Naive thymus-derived CD4-positive, alpha-beta T cell (primary cell): ENCODE measurements at regions of chr15 and their contacts with region 1.

Region 1: GRCh38 chr15:91444656-91445055 is 344.6 kb downstream of the SV2B start:
- DNase-seq: no peak
- ATAC-seq: no peak
- H3K4me3 ChIP-seq: no peak overlapping the region
- H3K4me3 Mint-ChIP-seq: no peak overlapping the region
- H3K27ac ChIP-seq: no peak overlapping the region
- H3K27ac Mint-ChIP-seq: peak overlapping the region in 2 of 9 donors; percentile 20 to 37
- H3K4me1 ChIP-seq: peaks cover 0 to 10% of the 10 kb centered on the region in 2 donors
- H3K4me1 Mint-ChIP-seq: peaks cover 0 to 22% (median 12%) of the 10 kb centered on the region in 7 donors
- H3K27me3 ChIP-seq: no peaks in the 10 kb centered on the region
- H3K27me3 Mint-ChIP-seq: peaks cover 0 to 29% (median 0%) of the 10 kb centered on the region in 5 donors

Region 2: DNA sequence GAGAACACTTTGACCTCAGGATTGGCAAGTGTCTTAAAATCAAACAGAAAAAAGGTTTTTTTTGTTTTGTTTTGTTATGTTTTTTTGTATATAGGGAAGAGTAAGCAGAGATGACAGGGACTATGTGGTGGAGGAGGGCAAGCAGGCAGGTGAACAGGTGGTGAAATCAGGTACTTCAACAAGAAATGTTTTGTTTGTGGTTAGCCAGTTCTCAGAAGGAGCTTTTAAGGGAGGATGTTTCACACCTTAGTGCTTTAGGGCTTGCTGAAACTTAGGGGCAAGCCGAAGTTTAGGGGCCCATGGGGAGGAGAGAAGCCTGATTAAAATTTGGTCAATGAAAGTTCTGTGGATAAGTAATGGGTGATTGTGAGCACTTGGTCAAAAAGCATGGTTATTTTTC is 38.1 kb after region 1 on chr15:
- CTCF ChIA-PET with region 1: no interaction called
- POLR2A ChIA-PET with region 1: no interaction called
- intact Hi-C with region 1: loop called in 1 of 2 experiments (anchors 5 kb)
- DNase-seq: peak in 5 of 9 donors; percentile 14 to 51 (median 37)
- ATAC-seq: peak; percentile 74
- H3K4me3 ChIP-seq: no peak overlapping the region
- H3K4me3 Mint-ChIP-seq: peak overlapping the region; percentile 7 to 67 (median 55)
- H3K27ac ChIP-seq: no peak overlapping the region
- H3K27ac Mint-ChIP-seq: peak overlapping the region; percentile 17 to 95 (median 74)
- H3K4me1 ChIP-seq: peaks cover 25 to 40% of the 10 kb centered on the region in 2 donors
- H3K4me1 Mint-ChIP-seq: peaks cover 24 to 72% (median 66%) of the 10 kb centered on the region in 7 donors
- H3K27me3 ChIP-seq: no peaks in the 10 kb centered on the region
- H3K27me3 Mint-ChIP-seq: peaks cover 0 to 2% (median 0%) of the 10 kb centered on the region in 5 donors